Posterior vena cava (tissue), 2 donors: ENCODE measurements at regions of chr7 and their contacts with region 1.

Region 1: DNA sequence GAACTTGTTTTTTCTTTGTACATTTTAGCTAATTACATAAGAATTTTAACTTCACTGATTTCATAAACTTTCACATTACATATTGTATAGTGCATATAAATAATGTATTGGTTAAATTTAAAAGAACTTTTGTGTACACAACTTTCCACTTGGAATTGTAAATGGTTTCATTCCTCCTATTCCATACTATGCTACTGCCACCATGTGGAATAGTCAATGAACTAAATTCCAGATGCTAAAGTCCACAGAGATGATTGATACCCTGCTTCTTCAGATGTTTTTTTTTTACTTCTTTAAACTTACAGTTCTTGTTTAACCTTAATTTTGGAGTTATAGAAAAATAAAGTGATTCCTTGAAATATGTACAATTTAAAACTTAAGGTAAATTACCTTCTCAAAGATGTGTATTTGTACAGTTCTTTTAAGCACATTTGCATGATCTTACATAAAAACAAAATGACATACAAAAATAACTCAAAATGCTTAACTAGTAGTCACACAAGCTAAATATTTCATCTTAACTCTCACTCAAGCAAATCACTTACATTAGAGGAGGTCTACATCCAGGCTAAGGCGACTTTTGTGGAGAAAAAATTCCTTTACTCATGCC is 247.6 kb upstream of the HGF start:
- DNase-seq: no peak

Region 2: GRCh38 chr7:80950550-80950967 is 1066.9 kb before region 1 on chr7:
- intact Hi-C with region 1: no loop called
- DNase-seq: no peak

Region 3: DNA sequence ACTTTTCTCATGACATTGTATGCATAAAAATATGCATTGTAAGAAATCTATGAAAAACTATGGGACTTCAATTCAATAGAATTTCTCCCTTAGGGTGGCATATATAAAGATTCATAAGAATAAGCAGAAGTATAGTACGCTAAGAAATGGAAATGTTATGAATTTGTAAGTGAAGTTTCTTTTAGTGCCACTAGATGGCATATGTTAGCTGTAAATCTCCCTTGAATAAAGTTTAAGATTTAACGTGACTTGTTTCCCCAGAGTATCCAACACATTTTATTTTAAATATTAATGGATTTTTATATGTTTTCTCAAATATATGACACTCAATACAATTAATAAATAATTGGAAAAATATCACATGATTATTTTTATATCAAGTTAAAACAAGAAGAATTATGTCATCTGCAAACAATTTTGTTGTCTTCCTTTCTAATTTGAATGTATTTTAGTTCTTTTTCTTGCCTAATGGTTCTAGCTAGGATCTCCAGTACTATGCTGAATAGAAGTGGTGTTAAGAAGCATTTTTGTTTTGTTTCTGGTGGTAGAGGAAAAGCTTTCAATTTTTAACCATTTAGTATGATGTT is 534.7 kb before region 1 on chr7:
- intact Hi-C with region 1: loop called in 1 of 2 experiments (anchors 10 kb)
- DNase-seq: no peak